ENCODE measurements at regions of chr16 and their contacts with region 1.

Region 1: GRCh38 chr16:74888208-74888852 is 96.6 kb downstream of the WDR59 start:
- DNase-seq: no peak
- H3K4me3 ChIP-seq: no peak overlapping the region
- H3K27ac ChIP-seq: no peak overlapping the region
- H3K4me1 ChIP-seq: no peaks in the 10 kb centered on the region
- H3K27me3 ChIP-seq: no peaks in the 10 kb centered on the region
- CTCF ChIP-seq: no peak

Region 2: GRCh38 chr16:74837056-74837455 is 51.3 kb before region 1 on chr16:
- CTCF ChIA-PET with region 1: no interaction called
- POLR2A ChIA-PET with region 1: no interaction called
- intact Hi-C with region 1: no loop called
- DNase-seq: no peak
- H3K4me3 ChIP-seq: no peak overlapping the region
- H3K27ac ChIP-seq: no peak overlapping the region
- H3K4me1 ChIP-seq: no peaks in the 10 kb centered on the region
- H3K27me3 ChIP-seq: no peaks in the 10 kb centered on the region
- CTCF ChIP-seq: no peak

Region 3: DNA sequence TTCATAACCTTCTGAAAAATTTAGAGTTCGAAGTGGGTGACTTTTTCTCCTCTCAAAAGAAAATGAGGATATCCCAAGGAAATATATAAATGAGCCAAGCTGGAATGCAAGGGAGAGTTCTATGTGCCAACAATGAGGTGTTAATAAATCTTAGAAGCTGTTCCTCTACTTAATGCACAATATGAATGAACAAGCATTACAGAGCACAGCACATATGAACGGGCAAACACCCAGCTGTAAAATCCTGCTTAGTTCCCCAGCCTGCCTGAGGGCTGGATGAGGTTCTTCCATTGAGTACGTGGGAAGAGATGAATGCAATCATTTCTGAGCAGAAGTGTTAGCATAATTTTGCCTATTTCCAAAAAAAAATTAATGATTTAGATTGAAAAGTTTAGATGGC is 38.5 kb after region 1 on chr16:
- CTCF ChIA-PET with region 1: no interaction called
- POLR2A ChIA-PET with region 1: no interaction called
- intact Hi-C with region 1: no loop called
- DNase-seq: no peak
- H3K4me3 ChIP-seq: no peak overlapping the region
- H3K27ac ChIP-seq: no peak overlapping the region
- H3K4me1 ChIP-seq: no peaks in the 10 kb centered on the region
- H3K27me3 ChIP-seq: no peaks in the 10 kb centered on the region
- CTCF ChIP-seq: no peak

Region 4: DNA sequence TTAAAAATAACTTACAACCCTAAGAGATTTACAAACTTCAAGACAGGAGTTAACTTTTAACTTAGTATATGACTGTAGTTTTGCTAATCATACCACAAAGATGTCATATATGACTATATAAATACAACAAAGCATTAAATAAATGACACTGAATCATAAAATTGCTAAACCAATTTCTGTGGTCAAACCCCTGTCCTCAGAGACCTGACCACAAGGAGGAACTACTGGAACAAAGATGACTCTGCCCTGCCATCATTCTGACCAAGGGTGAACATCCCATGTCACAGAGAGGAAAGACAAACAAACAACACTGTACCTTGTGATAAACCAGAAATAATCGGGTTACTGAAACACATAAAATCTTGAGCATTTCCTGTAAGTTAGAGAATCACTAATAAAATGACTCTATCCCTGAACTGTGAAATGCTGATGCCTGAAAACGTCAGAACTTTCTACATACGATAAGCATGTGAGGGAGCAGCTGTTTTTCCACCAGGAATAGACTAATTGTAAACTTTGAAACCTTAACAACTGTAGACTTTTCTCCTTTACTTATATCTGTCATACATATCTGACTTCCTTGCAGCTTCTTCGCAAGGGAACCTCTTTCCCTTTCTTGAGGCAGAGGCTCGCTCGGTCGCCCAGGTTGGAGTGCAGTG is 48.7 kb after region 1 on chr16:
- CTCF ChIA-PET with region 1: no interaction called
- POLR2A ChIA-PET with region 1: interaction called, 12 read pairs
- intact Hi-C with region 1: no loop called
- DNase-seq: peak in 1 of 2 experiments; percentile 51
- H3K4me3 ChIP-seq: no peak overlapping the region
- H3K27ac ChIP-seq: no peak overlapping the region
- H3K4me1 ChIP-seq: no peaks in the 10 kb centered on the region
- H3K27me3 ChIP-seq: no peaks in the 10 kb centered on the region
- CTCF ChIP-seq: no peak

Region 5: DNA sequence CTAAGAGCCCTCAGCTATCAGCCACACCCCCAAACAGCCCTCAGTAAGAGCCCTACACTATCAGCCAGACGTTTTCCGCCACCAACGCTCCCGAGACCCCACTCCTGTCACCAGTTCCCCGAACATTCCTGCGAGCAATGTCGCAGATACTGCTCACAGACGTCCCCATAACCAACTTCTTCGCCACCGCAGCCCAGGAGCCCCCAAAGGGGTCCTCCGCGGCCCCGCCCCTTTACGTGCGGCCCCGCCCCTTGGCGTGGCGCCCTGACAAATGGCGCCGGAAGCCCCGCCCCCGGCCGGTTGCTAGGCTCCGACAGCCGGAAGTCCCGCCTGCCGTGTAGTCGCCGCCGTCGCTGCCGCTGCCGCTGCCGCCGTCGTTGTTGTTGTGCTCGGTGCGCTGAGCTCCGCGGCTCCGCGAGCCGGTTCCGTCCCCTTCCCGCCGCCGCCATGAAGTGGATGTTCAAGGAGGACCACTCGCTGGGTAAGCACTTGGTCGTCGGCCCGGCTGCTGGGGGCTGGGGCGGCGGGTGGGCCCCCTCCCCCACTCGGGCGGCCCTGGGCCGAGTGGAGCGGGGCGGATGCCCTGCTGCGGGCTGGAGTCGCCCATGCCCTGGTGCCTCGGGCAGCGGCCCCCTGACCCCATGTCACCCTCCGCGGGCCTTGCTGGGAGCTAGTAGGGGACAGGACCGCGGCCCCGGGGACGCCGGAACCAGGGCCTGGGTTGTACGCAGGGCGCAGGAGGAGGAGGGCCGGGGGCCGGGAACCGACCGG is 677.9 kb after region 1 on chr16 and contains the start of gene GABARAPL2:
- CTCF ChIA-PET with region 1: no interaction called
- POLR2A ChIA-PET with region 1: no interaction called
- intact Hi-C with region 1: no loop called
- DNase-seq: peak; percentile 57 to 82
- H3K4me3 ChIP-seq: peak within 1 kb of the TSS; percentile 94
- H3K27ac ChIP-seq: no peak within 1 kb of the TSS
- H3K4me1 ChIP-seq: peaks cover 17% of the 10 kb centered on the region; the same call in 1 of the 2 replicates
- H3K27me3 ChIP-seq: no peaks in the 10 kb centered on the region
- CTCF ChIP-seq: no peak
- total RNA-seq, gene GABARAPL2: 86.1 and 103 TPM in 2 replicates